Adrenal gland (tissue), 19 donors: ENCODE measurements at regions of chr11 and their contacts with region 1.

Region 1: GRCh38 chr11:93234602-93235207 is 36.9 kb upstream of the SLC36A4 start:
- DNase-seq: peak; percentile 79 to 95 (median 90)
- H3K4me3 ChIP-seq: no peak overlapping the region
- H3K27ac ChIP-seq: no peak overlapping the region
- H3K4me1 ChIP-seq: peaks cover 4 to 12% of the 10 kb centered on the region in 2 donors
- H3K27me3 ChIP-seq: no peaks in the 10 kb centered on the region
- CTCF ChIP-seq: peak; percentile 87 to 98 (median 97)
- POLR2A ChIP-seq: no peak

Region 2: DNA sequence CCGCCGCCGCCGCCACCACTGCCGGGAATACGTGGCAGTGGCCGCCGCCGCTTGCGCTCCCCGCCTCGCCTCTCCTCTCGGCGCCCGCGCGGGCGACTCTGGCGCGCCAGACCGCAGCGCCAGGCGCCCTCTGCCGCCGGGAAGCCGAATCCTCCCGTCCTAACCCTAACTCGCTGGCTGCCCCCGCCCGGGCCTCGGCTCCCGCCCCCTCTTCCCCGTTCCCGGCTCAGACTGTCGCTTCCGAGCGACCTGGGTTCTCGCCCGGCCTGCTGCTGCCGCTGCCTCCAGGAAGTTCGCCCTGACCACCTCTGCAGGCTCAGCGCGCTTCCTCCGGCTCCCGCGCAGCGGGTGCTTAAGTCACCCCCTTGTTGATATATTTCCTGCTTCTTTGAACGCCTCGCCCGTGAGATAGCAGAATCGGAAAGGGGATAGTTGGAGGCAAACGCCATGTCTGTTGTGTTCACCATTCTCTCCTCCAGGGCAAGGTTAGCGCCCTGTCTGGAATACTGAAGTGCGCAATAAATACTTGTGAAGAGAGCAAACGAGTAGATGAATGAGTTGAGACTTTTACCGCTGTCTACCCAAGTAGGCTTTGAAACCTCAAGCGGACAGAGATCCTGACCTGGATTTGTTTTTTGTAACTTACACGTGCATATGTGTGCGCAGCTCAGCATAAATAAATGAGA is 308.7 kb after region 1 on chr11 and contains the start of gene SMCO4:
- intact Hi-C with region 1: loop called (anchors 5 kb)
- DNase-seq: peak; percentile 82 to 89 (median 87)
- H3K4me3 ChIP-seq: peak within 1 kb of the TSS in 3 of 4 donors; percentile 65 to 94 (median 65)
- H3K27ac ChIP-seq: peak within 1 kb of the TSS; percentile 62 to 93 (median 90)
- H3K4me1 ChIP-seq: peaks cover 16 to 38% of the 10 kb centered on the region in 2 donors
- H3K27me3 ChIP-seq: no peaks in the 10 kb centered on the region
- CTCF ChIP-seq: peak; percentile 39 to 85 (median 66)
- POLR2A ChIP-seq: peak; percentile 43 to 51
- total RNA-seq, gene SMCO4: 23.2 to 108 (median 78.0) TPM

Region 3: DNA sequence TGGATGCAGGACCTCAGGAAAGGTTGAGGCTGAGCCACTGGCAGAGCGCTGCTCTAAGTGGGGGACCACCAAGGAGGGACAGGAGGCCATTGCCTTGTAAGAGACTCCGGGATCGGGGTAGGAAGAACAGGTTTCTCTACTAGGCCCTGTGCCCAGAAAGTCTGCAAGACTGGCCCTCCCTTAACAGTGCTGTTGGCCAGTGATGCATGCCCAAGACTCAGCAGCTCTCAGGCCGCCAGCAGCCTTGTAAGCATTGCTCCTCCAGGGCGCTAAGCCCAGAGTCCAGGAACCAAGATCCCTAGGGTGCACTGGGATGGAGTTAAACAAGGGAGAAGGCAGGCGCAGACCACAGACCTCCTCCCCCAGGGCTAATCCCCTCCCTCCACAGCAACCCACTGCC is 854.6 kb after region 1 on chr11:
- intact Hi-C with region 1: no loop called
- DNase-seq: no peak
- H3K4me3 ChIP-seq: no peak overlapping the region
- H3K27ac ChIP-seq: no peak overlapping the region
- H3K4me1 ChIP-seq: no peaks in the 10 kb centered on the region
- H3K27me3 ChIP-seq: no peaks in the 10 kb centered on the region
- CTCF ChIP-seq: no peak
- POLR2A ChIP-seq: no peak